CD14-positive monocyte (primary cell): ENCODE measurements at regions of chr16 and their contacts with region 1.

Region 1: GRCh38 chr16:84277237-84277823 is 17.3 kb upstream of the WFDC1 start:
- DNase-seq: peak; percentile 30 to 60 (median 54)
- H3K4me3 ChIP-seq: no peak overlapping the region
- H3K4me3 Mint-ChIP-seq: no peak overlapping the region
- H3K27ac ChIP-seq: no peak overlapping the region
- H3K27ac Mint-ChIP-seq: no peak overlapping the region
- H3K4me1 ChIP-seq: no peaks in the 10 kb centered on the region
- H3K4me1 Mint-ChIP-seq: no peaks in the 10 kb centered on the region
- H3K27me3 ChIP-seq: no peaks in the 10 kb centered on the region
- H3K27me3 Mint-ChIP-seq: peaks cover 2 to 10% (median 3%) of the 10 kb centered on the region in 3 donors
- CTCF ChIP-seq: peak; percentile 93

Region 2: DNA sequence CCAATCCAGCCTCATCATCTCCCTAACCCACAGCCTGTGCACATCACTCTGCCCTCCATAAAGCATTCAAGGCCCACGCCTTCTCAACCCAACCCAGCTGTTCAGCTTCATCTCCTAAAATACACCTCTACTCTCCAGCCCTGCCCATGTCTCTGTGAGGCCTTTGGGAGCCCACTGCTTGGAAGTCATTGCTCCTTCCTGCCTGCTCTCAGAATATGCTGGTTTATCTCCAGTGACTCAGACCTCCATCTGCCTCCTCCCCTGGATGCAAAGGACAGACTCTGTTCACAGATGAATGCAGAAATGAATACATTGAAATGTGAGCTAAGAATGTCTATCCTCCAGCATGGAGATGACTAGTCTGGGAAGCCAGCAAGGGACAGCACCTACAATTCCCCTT is 56.5 kb before region 1 on chr16:
- intact Hi-C with region 1: no loop called
- DNase-seq: no peak
- H3K4me3 ChIP-seq: no peak overlapping the region
- H3K4me3 Mint-ChIP-seq: no peak overlapping the region
- H3K27ac ChIP-seq: no peak overlapping the region
- H3K27ac Mint-ChIP-seq: peak overlapping the region in 1 of 7 donors; percentile 46
- H3K4me1 ChIP-seq: no peaks in the 10 kb centered on the region
- H3K4me1 Mint-ChIP-seq: no peaks in the 10 kb centered on the region
- H3K27me3 ChIP-seq: no peaks in the 10 kb centered on the region
- H3K27me3 Mint-ChIP-seq: peaks cover 2 to 10% (median 7%) of the 10 kb centered on the region in 3 donors
- CTCF ChIP-seq: no peak

Region 3: DNA sequence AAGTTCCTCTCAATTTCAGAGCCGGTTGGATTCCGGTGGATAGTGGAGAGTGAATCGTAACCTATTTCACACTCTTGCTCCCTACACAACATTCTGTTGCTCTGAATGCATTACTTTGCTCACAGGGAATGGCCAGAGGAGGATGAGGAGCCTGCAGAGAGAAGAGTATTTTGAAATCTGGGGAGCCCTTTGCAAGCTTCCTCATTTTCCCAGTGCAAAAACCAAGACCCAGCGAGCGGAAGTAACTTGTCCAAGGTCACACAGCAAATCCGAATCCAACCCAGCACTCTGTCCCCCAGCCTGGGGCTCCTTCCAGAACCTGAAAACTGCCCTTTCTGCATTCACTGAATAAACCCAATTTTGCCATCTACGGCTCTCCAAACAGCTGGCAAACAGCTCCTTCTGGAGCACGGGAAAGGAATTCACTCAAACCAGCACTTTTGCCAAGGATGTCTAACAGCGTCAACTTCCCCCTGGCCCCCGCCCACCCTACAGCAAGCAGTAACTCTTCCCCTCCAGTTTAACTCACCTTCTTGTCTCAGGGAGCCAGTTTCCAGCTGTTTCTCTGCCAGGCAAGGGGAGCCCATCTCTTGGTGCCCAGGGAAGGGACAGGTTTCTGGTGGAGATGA is 38.1 kb before region 1 on chr16:
- intact Hi-C with region 1: no loop called
- DNase-seq: peak; percentile 26 to 64 (median 40)
- H3K4me3 ChIP-seq: peak overlapping the region in 1 of 3 experiments; percentile 51
- H3K4me3 Mint-ChIP-seq: peak overlapping the region; percentile 62 to 87
- H3K27ac ChIP-seq: no peak overlapping the region
- H3K27ac Mint-ChIP-seq: peak overlapping the region in 5 of 7 donors; percentile 23 to 65 (median 51)
- H3K4me1 ChIP-seq: peaks cover 11 to 13% of the 10 kb centered on the region in 2 donors
- H3K4me1 Mint-ChIP-seq: peaks cover 15% of the 10 kb centered on the region
- H3K27me3 ChIP-seq: no peaks in the 10 kb centered on the region
- H3K27me3 Mint-ChIP-seq: peaks cover 11 to 25% (median 17%) of the 10 kb centered on the region in 3 donors
- CTCF ChIP-seq: no peak

Region 4: GRCh38 chr16:84323621-84324020 is 46.3 kb after region 1 on chr16:
- intact Hi-C with region 1: no loop called
- DNase-seq: peak; percentile 11 to 60 (median 21)
- H3K4me3 ChIP-seq: no peak overlapping the region
- H3K4me3 Mint-ChIP-seq: no peak overlapping the region
- H3K27ac ChIP-seq: no peak overlapping the region
- H3K27ac Mint-ChIP-seq: peak overlapping the region in 2 of 7 donors; percentile 3 to 6
- H3K4me1 ChIP-seq: no peaks in the 10 kb centered on the region
- H3K4me1 Mint-ChIP-seq: peaks cover 5% of the 10 kb centered on the region
- H3K27me3 ChIP-seq: no peaks in the 10 kb centered on the region
- H3K27me3 Mint-ChIP-seq: peaks cover 0 to 2% (median 2%) of the 10 kb centered on the region in 3 donors
- CTCF ChIP-seq: no peak

Region 5: DNA sequence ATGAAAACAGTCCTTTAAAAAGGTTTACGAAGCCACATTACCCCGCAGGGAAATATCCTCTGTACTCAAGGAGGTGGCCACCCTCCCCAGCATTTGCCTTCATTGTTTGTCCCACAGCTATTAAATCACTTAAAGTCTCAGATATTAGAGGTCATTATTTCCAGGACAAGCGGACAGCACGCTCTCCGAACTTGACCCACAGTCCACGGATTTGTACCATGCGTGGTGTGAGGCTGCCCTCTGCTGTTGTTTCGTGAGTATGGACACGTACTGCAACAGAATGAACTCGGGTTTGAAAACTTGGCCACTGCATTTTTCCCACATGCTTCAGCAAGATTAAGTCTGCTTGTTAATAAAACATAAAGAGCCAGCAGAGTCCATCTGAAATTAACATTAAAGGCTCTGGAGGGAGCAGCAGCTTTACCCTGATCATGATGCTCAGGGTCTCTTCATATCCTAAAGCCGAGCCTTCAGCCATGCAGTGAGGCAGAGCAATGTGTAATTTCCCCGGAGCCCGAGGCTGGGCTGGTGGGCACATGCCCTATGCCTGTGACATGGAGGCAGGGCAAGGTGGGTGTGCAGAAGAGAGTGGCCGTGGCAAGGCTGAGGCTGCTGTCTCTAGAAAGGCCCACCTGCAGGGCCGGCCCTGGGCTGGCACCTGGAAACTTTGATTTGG is 207.4 kb after region 1 on chr16:
- intact Hi-C with region 1: loop called in 1 of 2 experiments (anchors 5 kb)
- DNase-seq: no peak
- H3K4me3 ChIP-seq: no peak overlapping the region
- H3K4me3 Mint-ChIP-seq: no peak overlapping the region
- H3K27ac ChIP-seq: no peak overlapping the region
- H3K27ac Mint-ChIP-seq: no peak overlapping the region
- H3K4me1 ChIP-seq: no peaks in the 10 kb centered on the region
- H3K4me1 Mint-ChIP-seq: no peaks in the 10 kb centered on the region
- H3K27me3 ChIP-seq: no peaks in the 10 kb centered on the region
- H3K27me3 Mint-ChIP-seq: peaks cover 0 to 2% (median 0%) of the 10 kb centered on the region in 3 donors
- CTCF ChIP-seq: peak; percentile 33

Region 6: GRCh38 chr16:84504420-84505248 is 227.3 kb after region 1 on chr16 and contains the start of gene MEAK7:
- intact Hi-C with region 1: loop called in 1 of 2 experiments (anchors 10 kb)
- DNase-seq: peak; percentile 97 to 98 (median 98)
- H3K4me3 ChIP-seq: peak within 1 kb of the TSS; percentile 71 to 95 (median 91)
- H3K4me3 Mint-ChIP-seq: peak within 1 kb of the TSS; percentile 81 to 87
- H3K27ac ChIP-seq: peak within 1 kb of the TSS; percentile 30 to 86
- H3K27ac Mint-ChIP-seq: peak within 1 kb of the TSS; percentile 35 to 86 (median 76)
- H3K4me1 ChIP-seq: peaks cover 37 to 44% of the 10 kb centered on the region in 2 donors
- H3K4me1 Mint-ChIP-seq: peaks cover 26% of the 10 kb centered on the region
- H3K27me3 ChIP-seq: no peaks in the 10 kb centered on the region
- H3K27me3 Mint-ChIP-seq: peaks cover 0 to 4% (median 2%) of the 10 kb centered on the region in 3 donors
- CTCF ChIP-seq: no peak
- polyA plus RNA-seq, gene MEAK7: 2.5 to 5.0 (median 4.7) TPM

Region 7: GRCh38 chr16:84629580-84629979 is 352.2 kb after region 1 on chr16:
- intact Hi-C with region 1: loop called in 1 of 2 experiments (anchors 10 kb)
- DNase-seq: no peak
- H3K4me3 ChIP-seq: no peak overlapping the region
- H3K4me3 Mint-ChIP-seq: no peak overlapping the region
- H3K27ac ChIP-seq: no peak overlapping the region
- H3K27ac Mint-ChIP-seq: no peak overlapping the region
- H3K4me1 ChIP-seq: peaks cover 26 to 27% of the 10 kb centered on the region in 2 donors
- H3K4me1 Mint-ChIP-seq: peaks cover 27% of the 10 kb centered on the region
- H3K27me3 ChIP-seq: no peaks in the 10 kb centered on the region
- H3K27me3 Mint-ChIP-seq: peaks cover 1 to 4% (median 2%) of the 10 kb centered on the region in 3 donors
- CTCF ChIP-seq: no peak

Region 8: GRCh38 chr16:84985079-84986065 is 708.0 kb after region 1 on chr16:
- intact Hi-C with region 1: no loop called
- DNase-seq: peak in 2 of 3 donors; percentile 23 to 36
- H3K4me3 ChIP-seq: peak overlapping the region in 1 of 3 experiments; percentile 46
- H3K4me3 Mint-ChIP-seq: peak overlapping the region in 1 of 2 donors; percentile 11
- H3K27ac ChIP-seq: peak overlapping the region; percentile 84 to 91
- H3K27ac Mint-ChIP-seq: peak overlapping the region; percentile 85 to 99 (median 97)
- H3K4me1 ChIP-seq: peaks cover 55 to 70% of the 10 kb centered on the region in 2 donors
- H3K4me1 Mint-ChIP-seq: peaks cover 76% of the 10 kb centered on the region
- H3K27me3 ChIP-seq: no peaks in the 10 kb centered on the region
- H3K27me3 Mint-ChIP-seq: peaks cover 0 to 7% (median 0%) of the 10 kb centered on the region in 3 donors
- CTCF ChIP-seq: no peak